ENCODE measurements at regions of chr5 and their contacts with region 1.

Region 1: DNA sequence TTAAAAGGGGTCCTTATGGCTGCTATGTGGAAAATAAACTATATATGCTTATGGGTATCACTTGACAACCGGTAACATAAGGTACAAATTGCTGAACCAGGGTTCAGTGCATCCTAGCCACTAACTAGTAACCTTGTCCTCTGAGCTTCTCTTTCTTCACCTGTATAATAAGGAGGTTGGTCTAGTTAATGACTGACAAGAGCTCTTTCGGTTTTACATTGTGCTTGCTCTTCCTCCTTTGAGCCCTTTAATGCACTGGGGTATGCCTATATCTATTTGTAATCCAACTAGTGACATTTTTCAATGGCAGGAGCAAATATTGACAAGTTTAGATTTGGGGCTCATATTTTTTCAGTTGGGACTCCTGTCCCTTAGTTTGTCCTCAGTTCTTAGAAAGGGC is 66.1 kb downstream of the NPR3 start:
- DNase-seq: no peak

Region 2: GRCh38 chr5:32223946-32224608 is 553.1 kb before region 1 on chr5:
- intact Hi-C with region 1: loop called in 1 of 2 experiments (anchors 10 kb)
- DNase-seq: no peak

Region 3: GRCh38 chr5:32859211-32859641 is 82.0 kb after region 1 on chr5:
- intact Hi-C with region 1: no loop called
- DNase-seq: no peak